Cardiac septum (tissue), 1 donor: ENCODE measurements at regions of chr15 and their contacts with region 1.

Region 1: DNA sequence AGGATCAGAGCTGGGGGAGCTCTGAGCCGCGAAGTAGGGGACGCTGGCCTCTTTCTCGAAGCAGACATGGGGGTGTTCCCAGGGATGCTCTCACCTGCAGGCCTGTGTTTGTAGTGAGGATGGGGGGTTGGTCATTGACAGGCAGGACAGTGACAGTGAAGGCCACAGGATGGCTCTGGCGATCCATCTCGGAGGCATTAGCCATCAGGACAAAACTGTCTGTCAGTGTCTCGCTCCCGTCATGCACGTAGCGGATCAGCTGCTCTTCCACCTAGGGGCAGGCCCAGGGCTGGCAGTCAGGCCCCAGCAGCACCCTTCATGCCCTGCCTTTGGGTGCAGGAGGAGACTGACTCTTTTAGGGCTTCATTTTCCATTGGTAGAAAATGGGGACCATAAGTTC is 28.0 kb downstream of the CSPG4 start:
- DNase-seq: no peak

Region 2: GRCh38 chr15:74978503-74978902 is 706.1 kb before region 1 on chr15:
- intact Hi-C with region 1: no loop called
- DNase-seq: no peak

Region 3: GRCh38 chr15:75367913-75368688 is 316.5 kb before region 1 on chr15 and contains the start of gene MAN2C1:
- intact Hi-C with region 1: loop called (anchors 10 kb)
- DNase-seq: peak; percentile 97
- total RNA-seq, gene MAN2C1: 153 TPM

Region 4: DNA sequence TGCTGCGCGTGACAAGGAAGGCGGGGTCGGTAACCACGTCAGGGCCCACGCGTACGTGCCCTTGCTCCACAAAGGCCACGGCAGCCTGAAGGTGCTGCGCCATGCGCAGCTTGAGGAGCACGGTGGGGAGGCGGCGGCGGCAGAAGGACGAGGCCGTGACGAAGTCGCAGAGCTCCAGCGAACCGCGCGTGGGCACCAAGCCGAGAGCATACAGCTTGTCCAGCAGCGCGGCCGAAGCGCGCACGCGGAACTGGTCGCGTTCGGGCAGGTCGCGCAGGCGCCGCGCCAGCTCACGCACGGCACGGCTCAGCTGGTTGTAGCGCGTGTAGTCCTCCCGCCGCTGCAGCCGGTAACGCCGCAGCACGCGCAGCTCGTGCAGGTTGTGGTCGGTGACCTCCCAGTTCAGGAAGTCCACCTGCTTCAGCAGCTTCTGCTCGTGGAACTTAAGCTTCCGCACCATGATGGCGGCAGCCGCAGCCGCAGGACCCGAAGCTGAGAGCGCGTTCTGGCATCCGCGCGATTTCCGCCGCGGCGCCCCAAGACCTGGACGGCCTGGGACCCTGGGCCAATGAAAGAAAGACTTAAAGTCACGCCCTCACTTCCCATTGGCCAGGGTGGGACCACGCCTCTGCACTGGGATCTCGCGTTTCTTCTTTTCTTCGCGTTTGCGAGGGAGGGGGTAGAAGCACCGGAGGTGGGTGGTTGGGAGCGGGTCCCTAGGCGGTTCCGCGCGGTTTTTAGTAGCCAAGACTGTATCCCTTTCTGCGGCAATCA is 44.7 kb before region 1 on chr15 and contains the start of gene IMP3:
- intact Hi-C with region 1: loop called (anchors 2 kb)
- DNase-seq: peak; percentile 97
- total RNA-seq, gene IMP3: 30.0 TPM

Region 5: GRCh38 chr15:75696311-75696720 is 11.7 kb after region 1 on chr15:
- intact Hi-C with region 1: no loop called
- DNase-seq: no peak

Region 6: GRCh38 chr15:75801859-75802593 is 117.4 kb after region 1 on chr15:
- intact Hi-C with region 1: loop called (anchors 2 kb)
- DNase-seq: peak; percentile 87

Region 7: GRCh38 chr15:75857886-75858285 is 173.2 kb after region 1 on chr15:
- intact Hi-C with region 1: no loop called
- DNase-seq: no peak